Heart left ventricle (tissue), 16 donors: ENCODE measurements at regions of chr3 and their contacts with region 1.

Region 1: GRCh38 chr3:142586803-142587406 is 8.4 kb upstream of the ATR start:
- DNase-seq: peak in 1 of 5 donors; percentile 32
- ATAC-seq: peak; percentile 28 to 83 (median 74)
- H3K4me3 ChIP-seq: no peak overlapping the region
- H3K27ac ChIP-seq: no peak overlapping the region
- H3K4me1 ChIP-seq: no peaks in the 10 kb centered on the region
- H3K27me3 ChIP-seq: peaks cover 0 to 3% (median 0%) of the 10 kb centered on the region in 9 donors
- CTCF ChIP-seq: peak; percentile 43 to 70 (median 62)
- POLR2A ChIP-seq: no peak

Region 2: GRCh38 chr3:142723968-142724681 is 137.2 kb after region 1 on chr3 and contains the start of gene TRPC1:
- intact Hi-C with region 1: loop called in 4 of 10 experiments (anchors 5 to 10 kb)
- DNase-seq: peak; percentile 77 to 84 (median 83)
- ATAC-seq: peak; percentile 80 to 96 (median 94)
- H3K4me3 ChIP-seq: peak within 1 kb of the TSS; percentile 72 to 96 (median 80)
- H3K27ac ChIP-seq: peak within 1 kb of the TSS; percentile 82 to 99 (median 91)
- H3K4me1 ChIP-seq: peaks cover 0 to 21% (median 6%) of the 10 kb centered on the region in 12 donors
- H3K27me3 ChIP-seq: peaks cover 0 to 14% (median 0%) of the 10 kb centered on the region in 9 donors
- CTCF ChIP-seq: no peak
- POLR2A ChIP-seq: peak; percentile 86 to 92
- total RNA-seq, gene TRPC1: 5.9 to 14.2 (median 11.2) TPM

Region 3: DNA sequence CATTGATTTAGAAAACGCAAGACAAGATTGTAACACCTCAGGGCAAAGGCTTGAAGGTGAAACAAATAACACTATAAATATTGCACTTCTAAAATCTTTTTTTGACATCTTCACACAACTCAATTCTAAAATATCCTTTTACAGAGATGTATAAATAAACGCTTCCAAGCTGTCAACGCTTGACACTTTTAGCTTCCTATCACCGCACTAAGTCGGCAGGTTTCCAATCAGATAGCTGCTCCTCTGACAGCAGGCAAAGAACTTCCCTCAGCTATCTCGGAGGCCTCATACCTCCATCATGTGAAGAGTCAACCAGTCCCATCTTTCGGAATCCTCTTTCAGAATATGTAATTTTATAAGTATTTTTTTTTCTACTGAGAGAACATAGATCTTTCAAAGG is 231.0 kb after region 1 on chr3:
- intact Hi-C with region 1: loop called in 7 of 10 experiments (anchors 10 kb)
- DNase-seq: no peak
- ATAC-seq: peak in 2 of 4 donors; percentile 50 to 65
- H3K4me3 ChIP-seq: no peak overlapping the region
- H3K27ac ChIP-seq: no peak overlapping the region
- H3K4me1 ChIP-seq: peaks cover 0 to 11% (median 0%) of the 10 kb centered on the region in 12 donors
- H3K27me3 ChIP-seq: no peaks in the 10 kb centered on the region
- CTCF ChIP-seq: no peak
- POLR2A ChIP-seq: no peak

Region 4: DNA sequence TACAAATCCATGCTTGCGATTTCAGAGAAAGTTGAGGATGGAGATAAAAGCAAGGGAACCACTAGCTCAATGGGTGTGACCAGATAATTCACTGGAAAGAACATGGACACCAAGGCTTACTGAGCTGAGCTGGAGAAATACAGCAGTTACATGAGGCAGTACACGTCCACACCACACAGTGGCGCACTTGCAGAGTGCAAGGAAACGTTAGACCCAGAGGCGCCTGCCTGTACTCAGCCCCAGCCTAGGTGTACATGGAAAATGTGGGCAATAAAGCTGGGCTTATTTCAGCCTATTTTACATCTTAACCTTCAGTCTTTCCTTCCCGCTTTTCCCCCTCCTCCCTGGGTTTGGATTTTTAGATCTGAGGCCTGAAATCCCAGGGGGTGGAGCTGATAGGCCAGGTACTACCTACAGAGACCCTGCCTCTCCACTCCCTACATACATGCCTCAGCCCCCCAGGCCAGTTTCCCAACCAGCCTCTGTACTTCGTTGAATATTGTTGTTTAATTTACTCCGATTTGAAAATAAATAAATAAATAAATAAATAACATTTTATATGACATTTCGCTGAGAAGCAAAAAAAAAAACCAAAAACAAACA is 241.9 kb after region 1 on chr3:
- intact Hi-C with region 1: loop called in 7 of 10 experiments (anchors 10 kb)
- DNase-seq: peak; percentile 67 to 87 (median 75)
- ATAC-seq: peak; percentile 78 to 97 (median 96)
- H3K4me3 ChIP-seq: no peak overlapping the region
- H3K27ac ChIP-seq: no peak overlapping the region
- H3K4me1 ChIP-seq: peaks cover 0 to 5% (median 0%) of the 10 kb centered on the region in 12 donors
- H3K27me3 ChIP-seq: no peaks in the 10 kb centered on the region
- CTCF ChIP-seq: peak; percentile 74 to 84 (median 80)
- POLR2A ChIP-seq: no peak

Region 5: GRCh38 chr3:142844339-142844977 is 257.6 kb after region 1 on chr3:
- intact Hi-C with region 1: loop called in 1 of 10 experiments (anchors 10 kb)
- DNase-seq: no peak
- ATAC-seq: no peak
- H3K4me3 ChIP-seq: no peak overlapping the region
- H3K27ac ChIP-seq: no peak overlapping the region
- H3K4me1 ChIP-seq: peaks cover 0 to 13% (median 4%) of the 10 kb centered on the region in 12 donors
- H3K27me3 ChIP-seq: no peaks in the 10 kb centered on the region
- CTCF ChIP-seq: peak in 8 of 12 donors; percentile 20 to 48 (median 36)
- POLR2A ChIP-seq: no peak